Prostate gland (tissue), 2 donors: ENCODE measurements at regions of chr15 and their contacts with region 1.

Region 1: DNA sequence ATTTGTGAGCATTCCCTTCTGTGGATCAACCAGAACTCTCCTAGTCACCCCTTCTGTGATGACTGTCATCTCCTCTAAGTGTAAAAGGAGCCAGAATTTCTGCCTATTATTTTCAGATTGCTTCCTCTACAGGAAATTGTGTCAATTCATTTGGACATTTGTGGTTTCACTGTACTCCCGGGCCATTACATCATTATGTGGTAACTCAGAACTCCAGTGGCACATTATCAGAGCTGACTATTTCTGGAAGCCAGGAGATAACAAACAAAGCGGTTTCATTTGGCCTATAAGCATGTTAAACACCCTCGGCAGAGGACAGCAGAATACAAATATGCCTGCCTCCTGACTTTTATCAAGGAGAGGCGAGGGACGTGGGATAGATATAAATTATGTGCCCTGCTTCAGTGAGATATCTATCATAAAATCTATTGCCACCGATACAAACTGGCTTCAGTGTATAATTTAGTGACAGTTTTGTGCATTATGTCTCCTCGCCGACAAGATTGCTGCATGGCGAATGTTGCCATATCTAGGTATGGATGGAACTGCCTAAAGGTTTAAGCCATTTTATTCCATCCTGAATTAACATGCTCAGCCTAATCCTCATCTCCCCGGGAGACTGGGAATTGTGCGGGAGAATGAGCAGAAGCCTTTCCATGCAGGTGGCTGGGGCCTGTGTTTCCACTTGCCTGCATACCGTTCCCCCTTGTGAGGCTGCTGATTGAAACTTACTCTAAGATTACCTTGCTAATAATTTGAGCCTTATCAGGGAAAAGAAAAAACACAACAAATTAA is 193.4 kb upstream of the SEMA6D start:
- DNase-seq: no peak
- H3K4me3 ChIP-seq: no peak overlapping the region
- H3K27ac ChIP-seq: no peak overlapping the region
- H3K4me1 ChIP-seq: no peaks in the 10 kb centered on the region
- H3K27me3 ChIP-seq: no peaks in the 10 kb centered on the region
- CTCF ChIP-seq: no peak
- POLR2A ChIP-seq: no peak

Region 2: DNA sequence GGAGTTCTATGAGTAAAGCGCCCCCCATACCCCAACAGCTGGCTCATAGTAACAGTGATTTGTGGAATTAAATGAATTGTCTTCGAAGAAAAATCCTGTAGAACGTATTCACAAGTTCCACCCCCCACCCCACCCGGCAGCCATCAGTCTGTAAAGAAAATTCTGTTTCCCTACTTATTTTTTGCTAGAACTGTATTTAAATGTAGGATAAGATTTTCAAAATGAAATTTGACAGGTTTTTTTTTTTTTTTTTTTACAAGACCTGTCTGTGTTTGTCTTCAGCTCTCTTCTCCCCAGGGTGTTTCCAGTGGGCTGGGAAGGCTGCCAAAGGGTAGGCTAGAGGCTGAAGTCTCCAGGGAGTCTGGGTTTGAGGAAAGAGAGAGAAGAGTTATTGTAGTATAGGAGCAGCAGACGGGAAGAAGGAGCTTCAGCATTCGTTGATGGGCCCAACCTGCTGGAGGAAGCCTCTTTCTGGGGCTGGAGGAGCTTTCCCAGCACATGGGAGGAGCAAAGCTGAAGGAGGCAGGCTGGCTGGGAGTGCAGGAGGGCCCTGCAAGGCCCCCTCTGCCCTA is 62.9 kb after region 1 on chr15:
- intact Hi-C with region 1: loop called (anchors 10 kb)
- DNase-seq: peak; percentile 15
- H3K4me3 ChIP-seq: no peak overlapping the region
- H3K27ac ChIP-seq: no peak overlapping the region
- H3K4me1 ChIP-seq: no peaks in the 10 kb centered on the region
- H3K27me3 ChIP-seq: no peaks in the 10 kb centered on the region
- CTCF ChIP-seq: no peak
- POLR2A ChIP-seq: no peak

Region 3: GRCh38 chr15:47673232-47674080 is 149.6 kb after region 1 on chr15:
- intact Hi-C with region 1: no loop called
- DNase-seq: no peak
- H3K4me3 ChIP-seq: no peak overlapping the region
- H3K27ac ChIP-seq: no peak overlapping the region
- H3K4me1 ChIP-seq: no peaks in the 10 kb centered on the region
- H3K27me3 ChIP-seq: no peaks in the 10 kb centered on the region
- CTCF ChIP-seq: no peak
- POLR2A ChIP-seq: no peak